Psoas muscle (tissue), 8 donors: ENCODE measurements at regions of chr16 and their contacts with region 1.

Region 1: GRCh38 chr16:55257966-55258613 is 65.9 kb upstream of the IRX6 start:
- DNase-seq: peak; percentile 52 to 77
- ATAC-seq: peak; percentile 78 to 91 (median 88)
- H3K4me3 ChIP-seq: no peak overlapping the region
- H3K27ac ChIP-seq: peak overlapping the region; percentile 40
- H3K4me1 ChIP-seq: no peaks in the 10 kb centered on the region
- H3K27me3 ChIP-seq: no peaks in the 10 kb centered on the region
- CTCF ChIP-seq: peak; percentile 71

Region 2: DNA sequence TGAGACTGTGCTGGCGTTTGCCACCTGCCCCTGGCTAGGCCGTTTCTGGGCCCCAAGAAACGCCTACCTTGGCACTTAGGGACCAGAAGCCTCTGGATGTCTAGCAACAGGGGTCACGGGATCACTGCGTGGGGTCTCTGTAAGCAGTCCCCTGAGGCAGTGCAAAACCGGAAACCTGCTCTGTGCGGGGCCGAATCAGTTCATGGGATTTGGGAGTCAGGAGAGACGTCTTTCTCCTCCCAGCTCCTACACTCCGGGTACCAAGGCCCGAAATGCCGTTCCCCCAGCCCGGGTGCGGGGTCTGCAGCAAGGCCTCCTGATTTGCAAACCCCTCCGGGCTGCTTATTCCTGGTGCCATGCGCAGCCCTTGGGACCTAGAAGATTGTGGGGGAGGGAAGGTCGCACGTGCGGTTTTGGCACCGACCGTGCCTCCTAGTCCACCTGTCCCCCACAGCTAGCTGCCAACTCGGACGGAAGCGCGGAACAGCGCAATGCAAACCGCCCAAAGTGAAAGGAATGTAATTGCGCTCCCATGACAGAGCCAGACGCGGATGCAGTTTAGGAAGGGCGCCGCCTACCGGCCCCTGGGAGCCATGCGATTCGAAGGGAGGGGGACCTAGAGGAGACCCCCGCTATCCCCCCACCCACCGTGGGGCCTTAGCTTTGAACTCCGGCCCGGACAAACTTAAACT is 321.0 kb before region 1 on chr16:
- intact Hi-C with region 1: loop called in 1 of 2 experiments (anchors 5 kb)
- DNase-seq: peak in 1 of 2 donors; percentile 81
- ATAC-seq: peak; percentile 40 to 76 (median 71)
- H3K4me3 ChIP-seq: peak overlapping the region; percentile 89
- H3K27ac ChIP-seq: peak overlapping the region; percentile 77
- H3K4me1 ChIP-seq: peaks cover 6% of the 10 kb centered on the region
- H3K27me3 ChIP-seq: peaks cover 0 to 33% (median 3%) of the 10 kb centered on the region in 3 donors
- CTCF ChIP-seq: peak; percentile 55

Region 3: GRCh38 chr16:55072976-55073375 is 185.1 kb before region 1 on chr16:
- intact Hi-C with region 1: no loop called
- DNase-seq: no peak
- ATAC-seq: no peak
- H3K4me3 ChIP-seq: no peak overlapping the region
- H3K27ac ChIP-seq: no peak overlapping the region
- H3K4me1 ChIP-seq: no peaks in the 10 kb centered on the region
- H3K27me3 ChIP-seq: no peaks in the 10 kb centered on the region
- CTCF ChIP-seq: no peak

Region 4: DNA sequence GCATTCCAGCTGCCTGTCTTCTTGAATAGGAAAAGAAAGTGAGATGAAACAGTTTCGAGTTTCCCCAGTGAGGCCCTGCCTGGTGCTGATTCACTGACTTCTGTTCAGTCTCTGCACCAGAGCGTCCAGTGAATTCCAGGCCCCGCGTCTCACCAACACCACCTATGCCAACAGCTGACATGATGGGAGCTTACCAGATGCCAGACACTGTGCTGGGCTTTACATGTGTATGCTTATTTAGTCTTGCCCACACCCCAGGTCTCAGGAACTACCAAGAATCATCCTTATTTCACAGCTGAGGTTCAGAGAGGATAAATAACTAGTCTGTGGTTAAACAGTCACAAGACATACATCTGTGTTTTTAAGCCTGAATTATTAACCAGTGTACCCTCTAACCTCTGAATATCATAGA is 36.8 kb after region 1 on chr16:
- intact Hi-C with region 1: loop called in 1 of 2 experiments (anchors 5 kb)
- DNase-seq: peak; percentile 34 to 67
- ATAC-seq: peak; percentile 82 to 88 (median 85)
- H3K4me3 ChIP-seq: no peak overlapping the region
- H3K27ac ChIP-seq: peak overlapping the region; percentile 65
- H3K4me1 ChIP-seq: peaks cover 25% of the 10 kb centered on the region
- H3K27me3 ChIP-seq: no peaks in the 10 kb centered on the region
- CTCF ChIP-seq: no peak

Region 5: DNA sequence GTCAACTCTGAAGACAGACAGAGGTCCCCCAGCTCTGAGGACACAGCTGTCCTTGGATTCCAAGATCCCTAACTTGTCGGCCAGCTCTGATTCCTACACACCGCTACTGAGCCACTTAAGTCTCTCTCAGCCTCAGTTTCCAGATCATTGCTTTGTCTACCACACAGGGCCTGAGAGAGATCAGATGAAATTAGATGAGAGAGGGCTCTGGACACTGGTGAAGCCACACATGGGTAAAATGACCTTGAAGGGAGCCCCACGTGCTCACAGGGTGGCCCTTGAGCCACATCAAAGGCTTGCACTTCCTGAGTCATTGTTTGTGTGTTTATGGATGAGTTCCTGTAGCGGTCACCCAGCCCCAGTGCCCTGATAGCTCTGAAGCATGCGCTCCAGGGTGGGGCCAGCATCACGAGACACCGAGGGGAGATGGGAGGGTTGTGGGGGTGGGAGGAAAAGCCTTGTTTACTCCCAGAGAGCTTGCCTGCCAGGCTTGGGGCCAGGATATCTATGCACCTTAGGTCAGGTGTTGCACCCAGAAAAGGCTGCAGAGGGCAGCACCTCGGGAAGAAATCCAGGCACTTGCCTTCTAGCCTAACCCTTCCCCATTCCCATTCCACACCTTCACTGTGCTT is 365.0 kb after region 1 on chr16:
- intact Hi-C with region 1: no loop called
- DNase-seq: no peak
- ATAC-seq: no peak
- H3K4me3 ChIP-seq: no peak overlapping the region
- H3K27ac ChIP-seq: no peak overlapping the region
- H3K4me1 ChIP-seq: no peaks in the 10 kb centered on the region
- H3K27me3 ChIP-seq: no peaks in the 10 kb centered on the region
- CTCF ChIP-seq: no peak